Natural killer cell (primary cell): ENCODE measurements at regions of chr11 and their contacts with region 1.

Region 1: DNA sequence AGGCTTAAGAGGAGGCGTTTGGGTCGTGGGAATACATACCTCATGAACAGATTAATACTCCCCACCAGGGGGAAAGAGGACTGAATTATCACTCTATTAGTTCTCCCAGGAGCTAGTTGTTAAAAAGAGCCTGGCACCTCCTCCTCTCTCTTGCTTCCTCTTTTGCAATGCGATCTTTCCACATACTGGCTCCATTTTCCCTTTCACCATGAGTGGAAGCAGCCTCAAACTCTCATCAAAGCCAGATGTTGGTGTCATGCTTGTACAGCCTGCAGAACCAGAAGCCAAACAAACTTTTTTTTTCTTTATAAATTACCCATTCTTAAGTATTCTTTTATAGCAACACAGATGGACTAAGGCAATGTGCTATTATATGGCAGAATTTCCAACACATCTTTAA is 258.5 kb downstream of the FAM76B start:
- DNase-seq: no peak
- ATAC-seq: no peak
- H3K4me3 ChIP-seq: no peak overlapping the region
- H3K4me3 Mint-ChIP-seq: no peak overlapping the region
- H3K27ac ChIP-seq: no peak overlapping the region
- H3K27ac Mint-ChIP-seq: no peak overlapping the region
- H3K4me1 ChIP-seq: no peaks in the 10 kb centered on the region
- H3K4me1 Mint-ChIP-seq: no peaks in the 10 kb centered on the region
- H3K27me3 ChIP-seq: no peaks in the 10 kb centered on the region
- H3K27me3 Mint-ChIP-seq: peaks cover 17% of the 10 kb centered on the region in 2 donors
- CTCF ChIP-seq: no peak

Region 2: DNA sequence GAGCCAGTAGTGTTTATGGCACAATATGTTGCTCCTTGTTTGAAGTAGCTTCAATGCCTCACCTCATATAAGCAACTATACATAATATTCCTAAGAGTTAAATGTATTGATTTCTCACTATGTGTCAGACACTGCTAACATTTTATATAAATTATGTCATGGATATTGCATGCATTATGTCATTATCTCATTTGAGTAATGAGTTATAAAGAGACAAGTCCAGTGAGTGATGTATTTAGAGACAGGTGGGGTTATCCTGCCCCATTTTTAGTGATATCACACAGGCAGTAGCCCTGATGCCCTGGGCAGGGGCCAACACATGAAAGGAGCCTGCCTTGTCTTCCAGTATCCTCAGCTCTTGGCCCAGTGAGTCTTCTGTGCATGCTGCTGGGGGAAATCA is 53.1 kb before region 1 on chr11:
- intact Hi-C with region 1: loop called (anchors 10 kb)
- DNase-seq: no peak
- ATAC-seq: no peak
- H3K4me3 ChIP-seq: no peak overlapping the region
- H3K4me3 Mint-ChIP-seq: no peak overlapping the region
- H3K27ac ChIP-seq: no peak overlapping the region
- H3K27ac Mint-ChIP-seq: no peak overlapping the region
- H3K4me1 ChIP-seq: no peaks in the 10 kb centered on the region
- H3K4me1 Mint-ChIP-seq: no peaks in the 10 kb centered on the region
- H3K27me3 ChIP-seq: no peaks in the 10 kb centered on the region
- H3K27me3 Mint-ChIP-seq: peaks cover 4 to 8% of the 10 kb centered on the region in 2 donors
- CTCF ChIP-seq: no peak

Region 3: GRCh38 chr11:95739108-95739938 is 208.2 kb after region 1 on chr11:
- intact Hi-C with region 1: no loop called
- DNase-seq: no peak
- ATAC-seq: no peak
- H3K4me3 ChIP-seq: no peak overlapping the region
- H3K4me3 Mint-ChIP-seq: no peak overlapping the region
- H3K27ac ChIP-seq: no peak overlapping the region
- H3K27ac Mint-ChIP-seq: no peak overlapping the region
- H3K4me1 ChIP-seq: no peaks in the 10 kb centered on the region
- H3K4me1 Mint-ChIP-seq: no peaks in the 10 kb centered on the region
- H3K27me3 ChIP-seq: no peaks in the 10 kb centered on the region
- H3K27me3 Mint-ChIP-seq: peaks cover 3 to 7% of the 10 kb centered on the region in 2 donors
- CTCF ChIP-seq: no peak